Mammary epithelial cell (primary cell): ENCODE measurements at regions of chr22 and their contacts with region 1.

Region 1: GRCh38 chr22:33920927-33921524 is 750 bp upstream of the LARGE1 start:
- DNase-seq: peak; percentile 96
- H3K4me3 ChIP-seq: peak overlapping the region; percentile 54 to 86 (median 74)
- H3K27ac ChIP-seq: no peak overlapping the region
- H3K4me1 ChIP-seq: peaks cover 26% of the 10 kb centered on the region
- H3K27me3 ChIP-seq: no peaks in the 10 kb centered on the region
- CTCF ChIP-seq: no peak

Region 2: DNA sequence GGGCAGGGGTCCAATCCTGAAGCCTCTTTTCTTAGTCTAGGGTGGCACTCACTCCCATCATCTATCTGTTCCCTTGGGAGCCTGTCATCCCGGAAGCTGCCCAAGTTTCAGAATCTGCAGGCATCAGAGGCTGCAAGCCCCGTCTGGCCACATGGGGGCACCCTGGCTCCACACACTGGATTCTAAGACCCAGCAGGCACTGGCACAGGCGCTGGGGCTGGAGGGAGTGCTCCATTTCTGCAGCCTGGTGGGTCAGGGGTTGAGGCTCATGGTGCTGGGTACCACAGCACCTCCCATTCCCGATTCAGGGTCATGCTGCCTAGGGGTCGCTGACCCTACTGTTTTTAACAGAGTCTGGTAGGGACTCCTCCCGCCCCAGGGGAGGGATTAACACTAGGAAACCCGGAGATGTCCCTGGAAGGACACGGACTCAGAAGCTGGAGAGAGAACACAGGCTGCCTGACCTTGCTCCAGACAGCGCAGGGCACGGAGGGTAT is 618.9 kb before region 1 on chr22:
- CTCF ChIA-PET with region 1: no interaction called
- dilution Hi-C with region 1: no loop called
- in situ Hi-C with region 1: no loop called
- intact Hi-C with region 1: loop called (anchors 1 kb)
- DNase-seq: peak; percentile 48
- H3K4me3 ChIP-seq: no peak overlapping the region
- H3K27ac ChIP-seq: no peak overlapping the region
- H3K4me1 ChIP-seq: no peaks in the 10 kb centered on the region
- H3K27me3 ChIP-seq: no peaks in the 10 kb centered on the region
- CTCF ChIP-seq: peak; percentile 88 to 99

Region 3: DNA sequence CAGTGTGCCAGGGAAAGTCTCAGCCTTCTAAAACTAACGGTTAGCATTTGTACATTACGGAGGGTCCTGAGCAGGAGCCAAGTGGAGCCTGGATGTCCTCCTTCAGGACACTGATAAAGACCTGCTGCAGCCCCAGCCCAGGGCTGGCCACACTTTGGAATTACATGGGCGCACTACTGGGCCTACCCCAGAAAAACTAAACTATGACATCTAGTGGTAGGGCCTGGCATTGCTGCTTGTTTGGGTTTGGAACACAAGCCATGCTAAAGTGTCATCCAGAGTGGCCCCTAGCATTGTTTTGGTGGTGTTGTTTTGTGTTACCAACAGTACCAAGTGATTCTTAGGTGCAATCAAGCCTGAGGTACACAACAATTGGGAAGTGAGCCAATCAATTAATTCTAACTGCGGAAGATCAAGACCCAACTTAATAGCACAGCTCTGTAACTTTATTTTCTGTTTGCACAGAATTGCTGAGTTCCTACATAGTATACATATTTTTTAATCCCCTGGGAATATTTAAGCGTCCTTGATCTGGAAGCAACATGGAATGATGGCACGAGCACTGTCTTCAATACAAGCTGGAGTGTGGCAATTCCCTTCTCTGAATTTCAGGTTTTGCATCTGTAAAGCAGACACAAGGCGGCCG is 341.5 kb before region 1 on chr22:
- CTCF ChIA-PET with region 1: no interaction called
- dilution Hi-C with region 1: no loop called
- in situ Hi-C with region 1: no loop called
- intact Hi-C with region 1: loop called (anchors 5 kb)
- DNase-seq: peak; percentile 28
- H3K4me3 ChIP-seq: no peak overlapping the region
- H3K27ac ChIP-seq: no peak overlapping the region
- H3K4me1 ChIP-seq: no peaks in the 10 kb centered on the region
- H3K27me3 ChIP-seq: no peaks in the 10 kb centered on the region
- CTCF ChIP-seq: peak; percentile 91 to 95

Region 4: DNA sequence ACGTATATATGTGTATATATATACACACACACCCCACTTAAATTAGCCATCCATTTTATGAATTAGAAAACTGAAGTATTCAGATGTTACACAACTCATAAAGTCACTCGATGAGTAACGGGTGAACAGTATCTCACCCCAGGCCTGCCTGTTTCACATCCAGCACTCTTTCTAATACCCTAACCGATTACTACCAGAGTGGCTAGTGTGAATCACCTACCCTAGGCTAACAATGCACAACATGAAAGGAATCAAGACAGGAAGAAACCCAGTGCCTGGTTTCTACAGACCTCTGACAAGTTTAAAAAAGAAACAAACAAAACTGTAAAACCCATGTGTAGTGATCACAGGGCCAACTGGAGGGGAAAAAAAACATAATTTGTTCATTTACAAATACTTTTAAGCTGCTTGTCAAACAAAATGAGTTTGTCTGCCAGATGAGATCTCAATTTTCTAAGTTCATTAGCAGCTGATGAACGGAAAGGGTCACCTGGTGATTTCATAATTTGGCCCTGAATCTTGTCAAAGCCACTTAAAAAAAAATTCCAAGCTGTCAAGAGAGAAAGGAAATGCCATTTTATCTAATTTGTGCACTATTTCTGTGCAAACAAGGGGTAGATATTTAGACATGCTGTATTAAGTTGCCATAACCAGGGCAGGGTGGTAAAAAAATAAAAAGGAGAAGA is 135.6 kb before region 1 on chr22:
- CTCF ChIA-PET with region 1: no interaction called
- dilution Hi-C with region 1: no loop called
- in situ Hi-C with region 1: no loop called
- intact Hi-C with region 1: loop called (anchors 10 kb)
- DNase-seq: peak; percentile 91
- H3K4me3 ChIP-seq: no peak overlapping the region
- H3K27ac ChIP-seq: no peak overlapping the region
- H3K4me1 ChIP-seq: peaks cover 3% of the 10 kb centered on the region
- H3K27me3 ChIP-seq: no peaks in the 10 kb centered on the region
- CTCF ChIP-seq: no peak

Region 5: GRCh38 chr22:34111210-34111824 is 190.3 kb after region 1 on chr22:
- CTCF ChIA-PET with region 1: interaction called, 4 read pairs
- dilution Hi-C with region 1: no loop called
- in situ Hi-C with region 1: no loop called
- intact Hi-C with region 1: loop called (anchors 1 kb)
- DNase-seq: peak; percentile 17
- H3K4me3 ChIP-seq: no peak overlapping the region
- H3K27ac ChIP-seq: no peak overlapping the region
- H3K4me1 ChIP-seq: no peaks in the 10 kb centered on the region
- H3K27me3 ChIP-seq: no peaks in the 10 kb centered on the region
- CTCF ChIP-seq: peak; percentile 46 to 72

Region 6: GRCh38 chr22:35231585-35232084 is 1310.6 kb after region 1 on chr22:
- CTCF ChIA-PET with region 1: no interaction called
- dilution Hi-C with region 1: no loop called
- in situ Hi-C with region 1: no loop called
- intact Hi-C with region 1: loop called (anchors 5 kb)
- DNase-seq: peak; percentile 68
- H3K4me3 ChIP-seq: no peak overlapping the region
- H3K27ac ChIP-seq: no peak overlapping the region
- H3K4me1 ChIP-seq: no peaks in the 10 kb centered on the region
- H3K27me3 ChIP-seq: no peaks in the 10 kb centered on the region
- CTCF ChIP-seq: peak; percentile 97 to 98